H1 (cell line): ENCODE measurements at regions of chr10 and their contacts with region 1.

Region 1: GRCh38 chr10:120735773-120736371 is 115.3 kb upstream of the WDR11 start:
- DNase-seq: no peak
- H3K4me3 ChIP-seq: no peak overlapping the region
- H3K27ac ChIP-seq: no peak overlapping the region
- H3K4me1 ChIP-seq: no peaks in the 10 kb centered on the region
- H3K27me3 ChIP-seq: peaks cover 0 to 2% (median 0%) of the 10 kb centered on the region in 4 experiments; a peak in 2 of 7 replicates
- CTCF ChIP-seq: peak in 2 of 3 experiments; percentile 42 to 60; a peak in 2 of 4 replicates
- EP300 ChIP-seq: no peak
- POLR2A ChIP-seq: no peak
- RAD21 ChIP-seq: peak; percentile 49 to 53

Region 2: DNA sequence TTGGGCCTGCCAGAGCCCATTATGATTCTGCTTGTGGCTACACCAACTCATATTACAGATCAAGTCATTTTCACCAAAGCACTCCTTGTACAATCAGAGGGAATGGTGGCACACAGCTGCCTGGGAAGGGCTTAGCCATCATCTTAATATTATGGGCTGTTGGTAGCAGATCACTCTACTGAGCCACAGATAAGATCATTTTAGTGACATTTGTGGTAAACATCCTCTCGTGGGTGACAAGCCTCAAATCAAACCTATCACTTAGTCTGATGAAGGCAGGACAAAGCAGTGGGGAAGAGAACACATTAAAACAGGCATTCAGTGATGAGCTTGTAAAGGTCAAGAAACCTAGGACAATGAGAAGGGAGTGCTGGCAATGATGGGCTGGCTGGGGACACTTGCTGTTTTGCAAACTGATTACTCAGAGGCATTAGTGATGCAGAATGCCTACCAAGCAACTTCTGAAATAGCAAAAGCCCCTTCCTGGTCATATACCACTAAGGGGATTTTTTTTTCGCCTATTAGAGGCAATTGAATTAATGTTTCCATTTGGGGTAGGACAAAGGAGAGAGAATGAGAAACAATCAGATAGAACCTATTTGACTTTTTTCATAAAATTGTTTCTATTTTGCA is 22.2 kb before region 1 on chr10:
- CTCF ChIA-PET with region 1: interaction called, 15 read pairs
- POLR2A ChIA-PET with region 1: no interaction called
- DNase-seq: no peak
- H3K4me3 ChIP-seq: no peak overlapping the region
- H3K27ac ChIP-seq: no peak overlapping the region
- H3K4me1 ChIP-seq: peaks cover 0 to 3% (median 0%) of the 10 kb centered on the region in 4 experiments; a peak in 1 of 7 replicates
- H3K27me3 ChIP-seq: no peaks in the 10 kb centered on the region
- CTCF ChIP-seq: no peak
- EP300 ChIP-seq: no peak
- POLR2A ChIP-seq: no peak
- RAD21 ChIP-seq: no peak

Region 3: DNA sequence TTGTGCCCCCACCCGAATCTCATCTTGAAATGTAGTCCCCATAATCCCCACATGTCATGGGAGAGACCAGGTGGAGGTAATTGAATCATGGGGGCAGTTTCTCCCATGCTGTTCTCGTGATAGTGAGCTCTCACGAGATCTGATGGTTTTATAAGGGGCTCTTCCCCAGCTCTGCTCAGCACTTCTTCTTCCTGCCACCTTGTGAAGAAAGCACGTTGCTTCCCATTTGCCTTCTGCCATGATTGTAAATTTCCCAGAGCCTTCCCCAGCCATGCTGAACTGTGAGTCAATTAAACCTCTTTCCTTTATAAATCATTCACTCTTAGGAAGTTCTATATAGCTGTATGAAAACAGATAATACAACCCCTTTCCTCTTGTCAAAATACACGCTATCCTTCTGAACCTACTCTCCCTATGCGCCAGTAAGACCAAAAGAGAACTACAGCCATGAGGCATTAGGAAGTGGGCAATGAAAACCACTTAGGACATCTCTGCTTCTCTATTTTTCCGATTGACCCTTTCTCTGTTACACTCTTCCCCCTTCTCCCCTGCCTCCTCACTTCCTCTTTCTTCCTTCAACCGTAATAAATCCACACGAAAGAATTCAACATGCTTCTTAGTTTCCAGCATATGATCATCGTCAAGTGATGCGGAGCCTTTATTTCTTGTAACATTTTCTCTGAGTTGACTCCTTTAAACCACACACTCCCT is 14.1 kb after region 1 on chr10:
- CTCF ChIA-PET with region 1: interaction called, 45 read pairs
- POLR2A ChIA-PET with region 1: no interaction called
- DNase-seq: no peak
- H3K4me3 ChIP-seq: no peak overlapping the region
- H3K27ac ChIP-seq: no peak overlapping the region
- H3K4me1 ChIP-seq: peaks cover 0 to 4% (median 2%) of the 10 kb centered on the region in 4 experiments; a peak in 2 of 7 replicates
- H3K27me3 ChIP-seq: no peaks in the 10 kb centered on the region
- CTCF ChIP-seq: no peak
- EP300 ChIP-seq: no peak
- POLR2A ChIP-seq: no peak
- RAD21 ChIP-seq: no peak

Region 4: GRCh38 chr10:120818301-120818700 is 82.4 kb after region 1 on chr10:
- CTCF ChIA-PET with region 1: no interaction called
- POLR2A ChIA-PET with region 1: no interaction called
- DNase-seq: no peak
- H3K4me3 ChIP-seq: no peak overlapping the region
- H3K27ac ChIP-seq: no peak overlapping the region
- H3K4me1 ChIP-seq: peaks cover 0 to 5% (median 0%) of the 10 kb centered on the region in 4 experiments; a peak in 1 of 7 replicates
- H3K27me3 ChIP-seq: no peaks in the 10 kb centered on the region
- CTCF ChIP-seq: peak in 2 of 3 experiments; percentile 8 to 31; a peak in 2 of 4 replicates
- EP300 ChIP-seq: no peak
- POLR2A ChIP-seq: no peak
- RAD21 ChIP-seq: peak; percentile 25 to 40; a peak in 3 of 4 replicates

Region 5: DNA sequence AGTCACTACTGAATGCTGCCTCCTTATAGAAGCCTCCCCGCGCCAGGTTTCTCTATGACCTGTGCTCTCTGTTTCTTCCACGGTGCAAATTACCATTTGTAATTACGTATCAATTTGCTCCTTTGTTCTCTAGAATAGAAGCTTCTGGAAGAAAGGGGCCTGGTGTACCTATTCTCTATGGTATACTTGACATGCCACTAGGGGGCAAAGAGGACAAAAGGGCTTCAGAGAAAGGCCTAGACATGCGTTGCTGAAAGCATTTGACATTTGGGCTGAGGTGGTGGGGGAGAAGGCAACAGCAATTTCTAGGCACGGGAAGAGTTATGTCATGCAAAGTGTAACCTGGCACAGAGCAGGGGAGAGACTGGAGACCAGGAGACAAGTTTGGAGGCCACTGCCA is 264.0 kb after region 1 on chr10:
- CTCF ChIA-PET with region 1: no interaction called
- POLR2A ChIA-PET with region 1: no interaction called
- DNase-seq: no peak
- H3K4me3 ChIP-seq: no peak overlapping the region
- H3K27ac ChIP-seq: no peak overlapping the region
- H3K4me1 ChIP-seq: peaks cover 0 to 4% (median under 1%) of the 10 kb centered on the region in 4 experiments; a peak in 2 of 7 replicates
- H3K27me3 ChIP-seq: no peaks in the 10 kb centered on the region; a peak in 2 of 7 replicates
- CTCF ChIP-seq: peak in 1 of 3 experiments; percentile 41; a peak in 2 of 4 replicates
- EP300 ChIP-seq: no peak
- POLR2A ChIP-seq: no peak
- RAD21 ChIP-seq: no peak; a peak in 1 of 4 replicates